ENCODE measurements at regions of chr9 and their contacts with region 1.

Region 1: DNA sequence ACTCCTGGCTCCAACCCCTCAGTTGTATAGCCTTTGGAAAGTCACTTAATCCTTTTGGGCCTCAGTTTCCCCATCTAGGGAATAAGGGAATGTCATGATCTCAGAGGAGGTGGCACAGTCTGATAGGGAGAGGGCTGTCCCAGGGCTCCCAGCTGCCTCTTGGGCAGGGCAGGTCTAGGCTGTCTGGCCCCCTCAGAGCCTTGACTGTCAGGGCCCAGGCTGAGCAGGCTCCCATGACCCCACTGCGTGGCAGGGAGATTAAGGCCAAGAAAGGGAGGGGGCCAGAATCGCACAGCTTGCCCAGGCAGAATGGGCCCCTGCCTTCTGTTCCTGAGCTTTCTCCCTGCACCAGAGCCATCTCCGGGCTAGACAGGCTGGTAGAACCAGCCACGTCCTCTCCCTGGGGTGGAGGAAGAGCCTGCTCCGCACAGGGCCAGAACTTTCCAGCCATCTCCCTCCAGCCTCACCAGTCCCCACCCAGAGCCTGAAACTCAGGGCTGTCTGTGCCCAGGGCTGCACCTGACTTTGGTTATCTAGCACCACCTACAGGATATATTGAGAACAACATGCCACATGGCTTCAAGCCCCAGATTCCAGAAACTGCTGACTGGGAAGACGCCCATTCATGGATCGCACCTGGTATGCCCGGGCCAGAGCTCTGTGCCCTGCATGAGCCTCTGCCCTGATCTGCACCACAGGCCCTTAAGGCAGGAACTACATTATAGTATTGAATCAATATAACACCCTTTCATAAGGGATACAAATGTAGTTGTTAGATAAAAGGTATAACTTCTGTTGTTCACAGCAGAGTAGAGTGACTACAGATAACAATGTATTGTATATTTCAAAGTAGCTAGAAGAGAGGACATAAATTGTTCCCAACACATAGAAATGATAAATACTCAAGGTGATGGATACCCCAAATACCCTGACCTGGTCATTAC is 32.0 kb downstream of the NAIF1 start:
- DNase-seq: peak; percentile 29 to 89 (median 67)
- ATAC-seq: peak; percentile 48
- H3K4me3 ChIP-seq: no peak overlapping the region
- H3K4me3 Mint-ChIP-seq: no peak overlapping the region
- H3K27ac ChIP-seq: no peak overlapping the region
- H3K27ac Mint-ChIP-seq: peak overlapping the region; percentile 89
- H3K4me1 ChIP-seq: peaks cover 44% of the 10 kb centered on the region
- H3K4me1 Mint-ChIP-seq: peaks cover 37% of the 10 kb centered on the region
- H3K27me3 ChIP-seq: no peaks in the 10 kb centered on the region
- H3K27me3 Mint-ChIP-seq: no peaks in the 10 kb centered on the region
- CTCF ChIP-seq: peak; percentile 86

Region 2: GRCh38 chr9:127930231-127931091 is 104.6 kb before region 1 on chr9 and contains the start of gene PIP5KL1:
- CTCF ChIA-PET with region 1: interaction called, 41 read pairs
- POLR2A ChIA-PET with region 1: interaction called, 11 read pairs
- intact Hi-C with region 1: no loop called
- DNase-seq: peak; percentile 45 to 83 (median 68)
- ATAC-seq: peak; percentile 60
- H3K4me3 ChIP-seq: peak within 1 kb of the TSS; percentile 40 to 53
- H3K4me3 Mint-ChIP-seq: peak within 1 kb of the TSS; percentile 69
- H3K27ac ChIP-seq: no peak within 1 kb of the TSS
- H3K27ac Mint-ChIP-seq: peak within 1 kb of the TSS; percentile 71
- H3K4me1 ChIP-seq: peaks cover 36% of the 10 kb centered on the region
- H3K4me1 Mint-ChIP-seq: peaks cover 35% of the 10 kb centered on the region
- H3K27me3 ChIP-seq: peaks cover 0 to 5% of the 10 kb centered on the region in 2 experiments
- H3K27me3 Mint-ChIP-seq: no peaks in the 10 kb centered on the region
- CTCF ChIP-seq: no peak
- total RNA-seq, gene PIP5KL1: 5.1 to 7.4 TPM

Region 3: DNA sequence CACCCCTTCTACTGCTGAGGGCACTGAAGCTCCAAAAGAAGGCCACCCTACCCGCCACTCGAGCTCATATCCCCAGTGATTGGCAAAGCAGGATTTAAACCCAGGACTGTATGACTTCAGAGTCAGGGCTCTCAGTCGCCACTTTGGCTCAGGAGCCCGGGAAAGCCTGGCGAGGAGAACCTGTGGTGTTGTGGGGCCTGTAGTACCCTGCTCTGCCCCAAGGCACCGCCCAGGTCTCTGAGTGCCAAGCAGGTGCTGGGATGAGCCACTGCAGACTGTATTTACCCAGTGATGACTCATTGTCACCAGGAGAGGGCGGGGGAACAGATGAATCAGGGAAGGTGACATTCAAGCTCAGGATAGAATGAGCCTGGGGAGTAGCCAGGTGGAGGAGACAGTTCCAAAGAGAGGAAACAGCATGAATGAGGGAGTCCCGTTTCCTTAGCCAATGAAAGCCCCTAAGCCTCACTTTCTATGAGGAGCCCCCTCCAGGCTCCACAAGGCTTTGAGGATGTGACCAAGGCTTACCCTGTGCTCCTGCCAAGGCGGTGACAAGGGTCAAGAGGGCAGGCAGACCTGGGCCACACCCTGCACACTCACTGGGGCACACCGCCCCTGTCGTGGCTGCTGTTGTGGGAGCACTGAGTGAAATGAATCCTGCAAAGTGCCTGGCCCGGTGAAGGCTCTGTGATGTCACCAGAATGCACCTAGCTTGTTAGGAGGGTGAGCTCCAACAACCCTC is 79.6 kb before region 1 on chr9:
- CTCF ChIA-PET with region 1: interaction called, 678 read pairs
- POLR2A ChIA-PET with region 1: interaction called, 16 read pairs
- intact Hi-C with region 1: loop called (anchors 1 kb)
- DNase-seq: peak; percentile 41 to 89 (median 82)
- ATAC-seq: peak; percentile 87
- H3K4me3 ChIP-seq: peak overlapping the region; percentile 4 to 21
- H3K4me3 Mint-ChIP-seq: peak overlapping the region; percentile 68
- H3K27ac ChIP-seq: peak overlapping the region; percentile 3 to 17
- H3K27ac Mint-ChIP-seq: peak overlapping the region; percentile 91
- H3K4me1 ChIP-seq: peaks cover 97% of the 10 kb centered on the region
- H3K4me1 Mint-ChIP-seq: peaks cover 85% of the 10 kb centered on the region
- H3K27me3 ChIP-seq: no peaks in the 10 kb centered on the region
- H3K27me3 Mint-ChIP-seq: no peaks in the 10 kb centered on the region
- CTCF ChIP-seq: peak; percentile 77

Region 4: GRCh38 chr9:127980706-127981558 is 54.2 kb before region 1 on chr9 and contains the start of gene EEIG1:
- CTCF ChIA-PET with region 1: interaction called, 214 read pairs
- POLR2A ChIA-PET with region 1: interaction called, 467 read pairs
- intact Hi-C with region 1: loop called (anchors 1 kb)
- DNase-seq: peak; percentile 95 to 99 (median 97)
- ATAC-seq: peak; percentile 89
- H3K4me3 ChIP-seq: peak within 1 kb of the TSS; percentile 73 to 91
- H3K4me3 Mint-ChIP-seq: peak within 1 kb of the TSS; percentile 97
- H3K27ac ChIP-seq: peak within 1 kb of the TSS; percentile 62 to 78
- H3K27ac Mint-ChIP-seq: peak within 1 kb of the TSS; percentile 98
- H3K4me1 ChIP-seq: peaks cover 36% of the 10 kb centered on the region
- H3K4me1 Mint-ChIP-seq: peaks cover 47% of the 10 kb centered on the region
- H3K27me3 ChIP-seq: no peaks in the 10 kb centered on the region
- H3K27me3 Mint-ChIP-seq: no peaks in the 10 kb centered on the region
- CTCF ChIP-seq: no peak
- total RNA-seq, gene EEIG1: 359 to 378 TPM

Region 5: GRCh38 chr9:128067876-128068613 is 33.0 kb after region 1 on chr9 and contains the start of gene SLC25A25:
- CTCF ChIA-PET with region 1: interaction called, 11 read pairs
- POLR2A ChIA-PET with region 1: interaction called, 5 read pairs
- intact Hi-C with region 1: no loop called
- DNase-seq: peak; percentile 100
- ATAC-seq: peak; percentile 85
- H3K4me3 ChIP-seq: peak within 1 kb of the TSS; percentile 84 to 87
- H3K4me3 Mint-ChIP-seq: no peak within 1 kb of the TSS
- H3K27ac ChIP-seq: peak within 1 kb of the TSS; percentile 60 to 99
- H3K27ac Mint-ChIP-seq: peak within 1 kb of the TSS; percentile 93
- H3K4me1 ChIP-seq: peaks cover 62% of the 10 kb centered on the region
- H3K4me1 Mint-ChIP-seq: peaks cover 60% of the 10 kb centered on the region
- H3K27me3 ChIP-seq: no peaks in the 10 kb centered on the region
- H3K27me3 Mint-ChIP-seq: no peaks in the 10 kb centered on the region
- CTCF ChIP-seq: no peak
- total RNA-seq, gene SLC25A25: 12.1 to 12.2 TPM

Region 6: DNA sequence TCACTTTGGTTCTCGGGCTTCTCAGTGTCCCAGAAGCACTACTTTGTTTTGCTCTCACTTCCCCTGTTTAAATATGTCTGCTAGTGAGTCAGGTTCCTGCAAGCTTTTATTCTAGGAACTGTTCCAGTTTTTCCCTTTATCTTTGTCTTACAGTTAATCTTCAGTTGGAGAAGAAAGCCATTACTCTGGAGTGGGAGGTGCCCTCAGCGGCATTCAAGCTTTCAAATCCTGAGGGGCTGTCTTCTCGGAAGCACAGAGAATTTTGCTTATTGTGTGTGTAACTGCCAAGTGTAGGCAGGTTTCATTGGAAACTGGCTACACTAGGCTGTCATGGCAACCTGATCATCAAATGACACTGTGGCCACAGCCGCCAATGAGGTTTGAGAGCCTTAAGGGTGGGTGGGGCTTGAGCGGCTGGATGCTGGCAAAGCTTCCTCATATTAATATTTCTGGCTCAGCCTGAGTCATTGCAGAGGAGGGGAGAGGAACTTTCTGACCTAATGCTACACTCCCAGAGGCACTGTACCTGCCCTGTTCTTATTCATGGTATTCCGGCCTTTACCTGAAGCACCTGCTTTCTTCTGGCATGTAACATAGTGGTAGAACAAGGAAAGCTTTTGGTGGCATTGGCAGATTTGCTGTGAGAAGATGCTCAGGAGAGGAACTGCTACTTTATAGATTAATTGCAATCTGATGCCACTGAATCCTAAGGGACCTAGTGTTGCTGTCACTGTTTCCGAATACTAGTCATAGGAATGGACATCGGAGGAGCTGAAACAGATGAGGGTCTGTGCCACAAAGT is 59.3 kb after region 1 on chr9:
- CTCF ChIA-PET with region 1: interaction called, 25 read pairs
- POLR2A ChIA-PET with region 1: no interaction called
- intact Hi-C with region 1: no loop called
- DNase-seq: peak in 7 of 9 experiments; percentile 38 to 82 (median 62)
- ATAC-seq: peak; percentile 60
- H3K4me3 ChIP-seq: no peak overlapping the region
- H3K4me3 Mint-ChIP-seq: peak overlapping the region; percentile 66
- H3K27ac ChIP-seq: peak overlapping the region; percentile 57 to 74
- H3K27ac Mint-ChIP-seq: peak overlapping the region; percentile 93
- H3K4me1 ChIP-seq: peaks cover 75% of the 10 kb centered on the region
- H3K4me1 Mint-ChIP-seq: peaks cover 80% of the 10 kb centered on the region
- H3K27me3 ChIP-seq: no peaks in the 10 kb centered on the region
- H3K27me3 Mint-ChIP-seq: no peaks in the 10 kb centered on the region
- CTCF ChIP-seq: no peak

Region 7: DNA sequence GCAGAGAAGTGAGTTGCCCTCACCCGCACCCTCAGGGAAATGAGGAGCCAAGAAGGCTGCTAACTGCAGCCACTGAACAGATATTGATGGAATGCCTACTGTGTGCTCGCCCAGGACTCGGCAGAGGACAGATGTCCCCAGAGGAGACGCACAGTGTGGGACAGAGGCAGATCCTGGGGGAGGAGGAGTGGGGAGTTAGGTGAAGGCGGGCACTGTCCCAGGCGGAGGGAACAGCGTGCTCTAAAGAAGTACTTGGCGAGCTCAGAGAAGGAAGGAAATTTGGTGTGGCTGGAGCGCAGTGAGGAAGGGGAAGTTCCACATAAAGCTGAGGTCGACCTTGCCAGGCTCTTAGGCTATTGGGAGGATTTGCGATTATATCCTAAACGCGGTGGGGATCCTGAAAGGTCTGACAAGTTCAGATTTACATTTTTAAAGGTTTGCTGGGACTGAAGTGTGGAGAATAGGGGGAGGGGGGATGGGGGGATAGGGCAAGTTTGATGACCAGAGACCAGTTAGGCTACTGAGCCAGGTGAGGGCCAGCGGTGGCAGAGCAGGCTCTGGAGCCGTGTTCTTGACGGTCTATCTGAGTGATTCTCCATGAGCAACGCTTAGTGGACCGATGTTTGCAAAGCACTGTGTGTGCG is 362.0 kb after region 1 on chr9:
- CTCF ChIA-PET with region 1: no interaction called
- POLR2A ChIA-PET with region 1: no interaction called
- intact Hi-C with region 1: no loop called
- DNase-seq: no peak
- ATAC-seq: no peak
- H3K4me3 ChIP-seq: no peak overlapping the region
- H3K4me3 Mint-ChIP-seq: no peak overlapping the region
- H3K27ac ChIP-seq: no peak overlapping the region
- H3K27ac Mint-ChIP-seq: peak overlapping the region; percentile 57
- H3K4me1 ChIP-seq: no peaks in the 10 kb centered on the region
- H3K4me1 Mint-ChIP-seq: no peaks in the 10 kb centered on the region
- H3K27me3 ChIP-seq: no peaks in the 10 kb centered on the region
- H3K27me3 Mint-ChIP-seq: peaks cover 2% of the 10 kb centered on the region
- CTCF ChIP-seq: no peak